ENCODE measurements at regions of chr13 and their contacts with region 1.

Region 1: DNA sequence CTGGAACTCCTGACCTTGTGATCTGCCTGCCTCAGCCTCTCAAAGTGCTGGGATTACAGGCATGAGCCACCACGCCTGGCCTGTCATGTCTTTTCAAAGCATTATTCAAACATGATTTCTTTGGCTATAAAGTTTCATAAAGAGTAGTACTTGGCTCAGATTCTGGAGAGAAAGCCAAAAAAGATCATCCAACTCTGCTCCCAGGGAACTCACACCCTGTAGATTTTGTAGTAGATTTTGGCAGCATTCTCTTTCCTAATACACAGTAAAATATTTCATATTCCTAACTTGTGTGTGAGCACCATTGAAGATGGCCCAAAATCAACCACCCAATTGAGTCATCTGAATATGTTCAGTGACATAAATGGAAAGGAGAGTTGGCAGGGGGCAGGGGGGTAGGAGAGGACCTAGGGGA is 48.4 kb downstream of the CAB39L start:
- DNase-seq: no peak
- H3K4me3 ChIP-seq: peak overlapping the region in 2 of 4 donors; percentile 4 to 25
- H3K27ac ChIP-seq: peak overlapping the region; percentile 81 to 89 (median 82)
- H3K4me1 ChIP-seq: peaks cover 0 to 38% (median 22%) of the 10 kb centered on the region in 4 donors
- H3K27me3 ChIP-seq: no peaks in the 10 kb centered on the region
- CTCF ChIP-seq: no peak
- EP300 ChIP-seq: no peak
- POLR2A ChIP-seq: no peak

Region 2: GRCh38 chr13:49356223-49356622 is 39.2 kb before region 1 on chr13:
- intact Hi-C with region 1: loop called (anchors 5 kb)
- DNase-seq: no peak
- H3K4me3 ChIP-seq: no peak overlapping the region
- H3K27ac ChIP-seq: peak overlapping the region; percentile 56 to 76 (median 62)
- H3K4me1 ChIP-seq: peaks cover 3 to 32% (median 21%) of the 10 kb centered on the region in 4 donors
- H3K27me3 ChIP-seq: no peaks in the 10 kb centered on the region
- CTCF ChIP-seq: no peak
- EP300 ChIP-seq: no peak
- POLR2A ChIP-seq: no peak

Region 3: DNA sequence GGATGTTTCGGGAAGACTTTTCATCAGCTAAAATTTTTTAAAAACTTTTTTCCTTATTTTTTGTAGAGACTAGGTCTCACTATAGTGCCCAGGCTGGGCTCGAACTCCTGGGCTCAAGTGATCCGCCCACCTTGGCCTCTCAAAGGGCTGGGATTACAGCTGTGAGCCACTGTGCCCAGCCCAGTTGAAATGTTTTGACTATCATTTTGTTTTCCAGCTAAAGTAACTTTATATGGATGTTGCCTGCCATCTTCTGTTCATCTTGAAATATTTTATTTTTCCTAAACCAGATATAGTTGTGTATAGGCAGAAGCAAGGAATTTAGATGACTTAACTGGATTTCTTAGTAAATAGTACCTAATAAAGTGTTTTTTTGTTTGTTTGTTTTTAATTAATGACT is 41.4 kb after region 1 on chr13:
- intact Hi-C with region 1: loop called (anchors 5 kb)
- DNase-seq: no peak
- H3K4me3 ChIP-seq: no peak overlapping the region
- H3K27ac ChIP-seq: peak overlapping the region in 3 of 4 donors; percentile 32 to 54 (median 45)
- H3K4me1 ChIP-seq: peaks cover 0 to 12% (median 3%) of the 10 kb centered on the region in 4 donors
- H3K27me3 ChIP-seq: no peaks in the 10 kb centered on the region
- CTCF ChIP-seq: peak; percentile 32 to 58 (median 36)
- EP300 ChIP-seq: no peak
- POLR2A ChIP-seq: no peak

Measured in esophagus muscularis mucosa (tissue), 4 donors.